Body of pancreas (tissue), 4 donors: ENCODE measurements at regions of chr10 and their contacts with region 1.

Region 1: DNA sequence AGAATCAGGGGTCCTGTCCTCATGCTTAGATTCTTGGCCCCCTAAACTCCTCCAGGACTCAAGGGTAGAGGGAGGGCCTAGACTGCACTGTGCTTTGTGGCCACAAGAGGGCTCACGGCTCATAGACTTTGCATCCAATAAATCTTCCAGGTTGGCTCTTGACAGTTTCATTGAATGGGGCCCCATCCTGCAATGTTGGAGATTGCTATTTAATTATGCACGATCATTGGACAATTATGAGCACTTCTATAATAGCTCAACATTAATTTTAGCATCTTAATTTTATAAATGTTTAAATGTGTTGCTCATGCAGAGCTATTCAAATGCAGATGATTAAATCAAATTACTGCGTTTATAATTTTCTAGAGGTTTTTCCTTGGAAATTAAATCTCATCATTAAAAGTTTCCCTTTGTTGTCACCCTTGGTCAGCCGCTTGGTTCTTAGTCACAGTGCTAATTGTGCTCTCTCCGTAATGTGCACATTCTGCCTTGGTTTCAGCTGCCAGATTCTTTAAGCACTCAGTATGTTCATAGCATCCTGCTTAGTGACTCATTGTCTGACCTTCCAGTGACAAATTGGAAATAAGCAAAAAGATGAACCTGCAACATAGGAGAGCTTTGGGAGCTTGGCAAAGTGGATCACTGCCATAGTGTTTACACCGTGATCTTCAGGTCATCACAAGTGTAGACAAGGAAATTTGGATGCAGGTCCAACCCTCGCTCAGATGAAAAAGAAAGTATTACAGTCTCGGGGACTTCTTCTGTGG is 33.4 kb upstream of the PLPP4 start:
- DNase-seq: peak; percentile 29 to 63 (median 39)
- ATAC-seq: no peak
- H3K4me3 ChIP-seq: no peak overlapping the region
- H3K27ac ChIP-seq: no peak overlapping the region
- H3K4me1 ChIP-seq: no peaks in the 10 kb centered on the region
- H3K27me3 ChIP-seq: no peaks in the 10 kb centered on the region
- CTCF ChIP-seq: peak; percentile 64 to 89 (median 75)
- POLR2A ChIP-seq: no peak

Region 2: DNA sequence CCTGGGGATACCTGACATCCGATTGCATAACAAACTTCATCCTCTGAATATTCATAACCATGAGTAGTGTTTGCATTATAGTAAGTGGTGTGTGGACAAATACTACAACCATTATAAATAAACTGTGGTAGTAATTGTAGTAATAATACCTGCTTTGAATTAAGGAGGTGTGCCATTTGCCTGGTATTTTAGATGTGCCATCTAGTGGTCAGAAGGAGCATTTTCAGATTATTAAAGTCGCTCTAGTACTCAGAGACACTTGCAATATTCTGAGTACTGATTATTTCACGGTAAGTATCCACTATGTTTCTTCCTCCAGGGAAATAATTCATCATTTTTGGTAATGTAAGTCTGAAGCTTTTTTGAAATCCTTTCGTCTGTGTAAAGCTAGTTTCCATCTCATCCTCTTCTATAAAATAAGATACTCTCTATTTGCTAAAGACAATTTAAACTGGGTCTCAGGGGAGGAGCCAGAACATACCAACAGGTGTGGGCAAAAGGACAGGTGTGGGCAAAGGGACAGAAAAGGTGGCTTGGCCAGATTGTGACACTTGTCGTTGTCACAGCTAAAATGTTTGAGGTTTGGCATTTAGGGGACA is 312.3 kb after region 1 on chr10:
- intact Hi-C with region 1: loop called (anchors 5 kb)
- DNase-seq: no peak
- ATAC-seq: peak; percentile 42
- H3K4me3 ChIP-seq: no peak overlapping the region
- H3K27ac ChIP-seq: no peak overlapping the region
- H3K4me1 ChIP-seq: no peaks in the 10 kb centered on the region
- H3K27me3 ChIP-seq: no peaks in the 10 kb centered on the region
- CTCF ChIP-seq: peak; percentile 50 to 78 (median 65)
- POLR2A ChIP-seq: no peak